Activated T-helper 1 cell treated with anti-CD3 and anti-CD28 coated beads, Interleukin-12 subunit alpha, Interleukin-12 subunit beta, Interleukin-2, Interleukin-4 antibody, amounts not matched to agents 30 ng/mL and 10 ng/mL and 1 ng/mL, durations not matched to agents 14 hours and 24 hours and 36 hours (primary cell): ENCODE measurements at regions of chr16 and their contacts with region 1.

Region 1: GRCh38 chr16:71808593-71809459 is at the start of gene AP1G1:
- DNase-seq: peak; percentile 89
- H3K4me3 Mint-ChIP-seq: peak within 1 kb of the TSS; percentile 96
- H3K27ac Mint-ChIP-seq: peak within 1 kb of the TSS; percentile 100
- H3K4me1 Mint-ChIP-seq: peaks cover 21% of the 10 kb centered on the region
- H3K27me3 Mint-ChIP-seq: no peaks in the 10 kb centered on the region
- total RNA-seq, gene AP1G1: 85.5 and 90.7 TPM in 2 replicates

Region 2: DNA sequence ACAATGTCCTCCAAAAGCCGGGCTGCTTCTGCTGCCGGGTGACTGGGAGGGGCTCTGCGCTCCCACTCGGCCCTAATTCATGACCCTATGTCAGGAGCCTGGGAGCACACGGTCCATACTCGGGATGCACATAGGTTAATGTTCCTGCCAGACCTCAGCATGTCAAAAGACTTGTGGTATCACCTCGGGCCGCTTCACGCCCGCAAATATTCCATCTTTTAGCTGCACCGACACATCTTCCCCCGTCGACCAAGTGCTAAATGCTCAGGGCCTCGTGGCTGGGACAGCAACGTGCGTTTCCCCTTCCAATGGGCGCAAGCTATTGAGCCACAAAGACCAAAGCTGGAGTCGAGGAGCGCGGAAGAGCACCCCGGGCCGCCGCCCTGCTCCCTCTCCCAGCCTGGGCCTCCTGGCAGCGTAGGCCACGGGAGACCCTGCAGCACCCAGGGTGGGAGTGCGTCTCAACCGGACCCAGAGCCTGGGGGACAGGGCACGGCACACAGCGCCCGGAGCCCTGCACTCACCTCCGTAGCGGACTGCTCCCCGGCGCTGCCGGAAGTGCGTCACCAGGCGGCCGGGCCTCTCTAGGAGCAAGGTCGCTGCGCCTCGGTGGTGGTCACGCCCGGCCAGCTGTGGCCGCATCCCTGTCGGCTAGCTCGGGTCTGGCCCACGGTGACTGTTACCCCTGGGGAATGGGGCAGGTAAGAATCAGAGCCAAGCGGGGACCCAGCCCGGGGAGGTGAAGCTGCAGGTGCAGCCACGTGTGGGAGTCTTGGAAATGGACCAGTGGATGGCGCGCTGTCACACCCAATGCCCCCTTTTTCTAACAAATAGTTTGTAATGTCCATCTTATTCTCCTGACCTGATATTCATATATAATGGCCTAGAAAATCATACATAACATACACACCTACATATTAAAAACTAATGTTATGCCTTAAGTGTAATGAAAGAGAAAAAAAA is 346.9 kb before region 1 on chr16 and contains the start of gene ZNF23:
- intact Hi-C with region 1: loop called (anchors 10 kb)
- DNase-seq: peak; percentile 71
- H3K4me3 Mint-ChIP-seq: peak within 1 kb of the TSS; percentile 86
- H3K27ac Mint-ChIP-seq: peak within 1 kb of the TSS; percentile 86
- H3K4me1 Mint-ChIP-seq: peaks cover 13% of the 10 kb centered on the region
- H3K27me3 Mint-ChIP-seq: peaks cover 1% of the 10 kb centered on the region
- total RNA-seq, gene ZNF23: 4.9 and 6.4 TPM in 2 replicates

Region 3: GRCh38 chr16:71794943-71795342 is 13.9 kb before region 1 on chr16:
- intact Hi-C with region 1: no loop called
- DNase-seq: no peak
- H3K4me3 Mint-ChIP-seq: no peak overlapping the region
- H3K27ac Mint-ChIP-seq: no peak overlapping the region
- H3K4me1 Mint-ChIP-seq: peaks cover 42% of the 10 kb centered on the region
- H3K27me3 Mint-ChIP-seq: no peaks in the 10 kb centered on the region

Region 4: DNA sequence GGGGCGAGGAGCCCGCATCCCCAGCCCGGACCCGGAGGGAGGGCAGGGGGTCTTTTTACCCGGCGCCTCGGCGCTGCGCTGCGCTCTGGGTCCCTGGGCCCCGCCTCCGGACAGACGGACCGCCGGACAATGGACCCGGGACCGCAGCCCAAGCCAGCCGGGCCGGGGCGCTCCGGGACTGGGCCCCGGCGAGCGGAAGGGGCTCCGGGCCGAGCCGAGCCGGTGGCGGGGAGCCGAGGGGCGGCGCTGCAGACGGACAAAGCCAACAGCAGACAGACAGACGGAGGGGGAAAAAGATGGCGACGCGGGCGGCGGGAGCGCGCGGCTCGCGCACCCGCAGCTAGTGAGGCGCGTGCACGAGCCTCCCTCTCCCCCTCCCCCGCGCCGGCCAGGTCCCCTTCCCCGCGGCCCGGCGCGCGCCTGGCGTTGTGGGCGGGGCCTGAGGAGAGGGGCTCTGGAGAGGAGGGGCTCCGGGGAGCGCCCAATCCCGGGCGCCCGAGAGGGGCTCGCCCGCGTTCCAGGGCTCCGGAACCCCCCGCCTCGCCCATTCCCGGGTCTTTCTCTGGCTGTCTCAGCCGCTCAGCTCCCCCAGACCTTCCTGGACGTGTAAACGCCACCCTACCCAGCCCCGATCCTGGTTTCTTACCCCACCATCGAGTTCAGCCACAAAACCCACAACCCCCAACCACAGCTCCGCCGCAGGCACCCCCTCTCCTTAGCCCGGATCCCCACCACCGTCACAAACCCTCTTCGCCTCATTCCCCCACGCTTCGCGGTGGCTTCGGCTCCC is 75.2 kb after region 1 on chr16 and contains the start of gene ZNF821:
- intact Hi-C with region 1: loop called (anchors 1 kb)
- DNase-seq: peak; percentile 61
- H3K4me3 Mint-ChIP-seq: peak within 1 kb of the TSS; percentile 96
- H3K27ac Mint-ChIP-seq: peak within 1 kb of the TSS; percentile 94
- H3K4me1 Mint-ChIP-seq: peaks cover 54% of the 10 kb centered on the region
- H3K27me3 Mint-ChIP-seq: peaks cover 16% of the 10 kb centered on the region
- total RNA-seq, gene ZNF821: 6.4 and 7.4 TPM in 2 replicates

Region 5: GRCh38 chr16:71961066-71962039 is 152.5 kb after region 1 on chr16:
- intact Hi-C with region 1: loop called (anchors 1 kb)
- DNase-seq: peak; percentile 70
- H3K4me3 Mint-ChIP-seq: no peak overlapping the region
- H3K27ac Mint-ChIP-seq: no peak overlapping the region
- H3K4me1 Mint-ChIP-seq: peaks cover 9% of the 10 kb centered on the region
- H3K27me3 Mint-ChIP-seq: peaks cover 4% of the 10 kb centered on the region

Region 6: GRCh38 chr16:72093448-72094265 is 284.8 kb after region 1 on chr16 and contains the starts of genes DHX38 and TXNL4B:
- intact Hi-C with region 1: loop called (anchors 1 kb)
- DNase-seq: peak; percentile 92
- H3K4me3 Mint-ChIP-seq: peak within 1 kb of the TSS; percentile 99
- H3K27ac Mint-ChIP-seq: peak within 1 kb of the TSS; percentile 99
- H3K4me1 Mint-ChIP-seq: peaks cover 64% of the 10 kb centered on the region
- H3K27me3 Mint-ChIP-seq: no peaks in the 10 kb centered on the region
- total RNA-seq, gene DHX38: 89.8 and 99.4 TPM in 2 replicates
- total RNA-seq, gene TXNL4B: 24.0 and 25.1 TPM in 2 replicates